ENCODE measurements at regions of chr16 and their contacts with region 1.

Region 1: GRCh38 chr16:3123986-3124886 is 10.6 kb upstream of the ZNF213 start:
- DNase-seq: peak; percentile 95
- H3K4me3 ChIP-seq: peak overlapping the region; percentile 45 to 58 (median 46)
- H3K27ac ChIP-seq: no peak overlapping the region
- H3K4me1 ChIP-seq: peaks cover 8% of the 10 kb centered on the region
- H3K27me3 ChIP-seq: no peaks in the 10 kb centered on the region
- CTCF ChIP-seq: peak in 1 of 2 donors; percentile 35
- POLR2A ChIP-seq: peak; percentile 55

Region 2: DNA sequence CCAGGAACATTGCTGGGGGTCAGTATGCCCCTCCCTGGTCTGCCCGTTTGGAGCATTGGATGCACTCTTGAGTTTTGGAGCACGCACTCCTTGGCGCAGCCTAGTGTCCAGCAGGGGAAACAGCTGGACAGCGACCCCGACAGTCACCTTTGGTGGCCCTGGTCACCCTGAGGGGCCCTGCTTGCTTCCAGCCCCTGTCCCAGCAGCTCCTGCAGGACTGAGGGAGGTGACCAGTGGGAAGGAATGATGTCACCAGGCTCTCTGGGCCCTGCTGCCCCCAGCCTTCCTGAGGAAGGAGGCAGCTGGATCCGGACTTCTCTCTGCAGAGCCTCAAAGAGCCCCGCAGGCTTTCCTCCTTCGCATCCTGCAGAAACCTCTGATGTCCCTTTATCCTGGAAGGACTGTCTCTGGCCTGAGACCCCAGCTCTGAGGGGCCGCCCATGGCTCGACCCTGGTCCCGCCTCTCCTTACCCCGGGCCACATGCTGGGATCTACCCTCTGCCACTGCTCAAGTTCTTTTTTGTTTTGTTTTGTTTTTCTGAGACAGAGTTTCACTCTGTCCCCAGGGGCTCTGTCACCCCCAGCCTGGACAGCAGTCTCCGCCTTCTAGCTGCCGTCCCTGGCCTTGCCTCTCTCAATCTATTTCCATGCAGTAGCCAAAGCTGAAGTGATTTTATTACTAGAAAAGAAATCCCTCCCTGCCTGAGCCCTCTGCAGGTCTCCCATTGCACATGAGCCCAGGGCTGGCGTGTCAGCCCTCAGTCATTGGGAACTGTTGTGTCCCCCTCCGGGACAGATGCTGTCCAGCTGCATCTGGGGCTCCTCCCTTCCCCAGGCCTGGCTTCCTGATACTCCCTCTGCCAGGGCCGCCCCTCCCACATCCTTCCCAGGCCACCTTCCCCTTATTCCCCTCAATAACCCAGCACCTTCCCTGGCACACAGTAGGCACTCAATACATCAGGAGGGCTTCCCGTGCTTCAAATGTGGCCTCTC is 36.7 kb before region 1 on chr16:
- CTCF ChIA-PET with region 1: interaction called, 16 read pairs
- POLR2A ChIA-PET with region 1: no interaction called
- dilution Hi-C with region 1: no loop called
- intact Hi-C with region 1: loop called (anchors 2 kb)
- DNase-seq: peak; percentile 89
- H3K4me3 ChIP-seq: peak overlapping the region in 1 of 3 experiments; percentile 5
- H3K27ac ChIP-seq: peak overlapping the region; percentile 73
- H3K4me1 ChIP-seq: peaks cover 25% of the 10 kb centered on the region
- H3K27me3 ChIP-seq: no peaks in the 10 kb centered on the region
- CTCF ChIP-seq: peak; percentile 3 to 23
- POLR2A ChIP-seq: peak; percentile 52

Region 3: GRCh38 chr16:3099732-3100499 is 24.3 kb before region 1 on chr16:
- CTCF ChIA-PET with region 1: interaction called, 49 read pairs
- POLR2A ChIA-PET with region 1: interaction called, 3 read pairs
- dilution Hi-C with region 1: no loop called
- intact Hi-C with region 1: loop called (anchors 1 kb)
- DNase-seq: peak; percentile 81
- H3K4me3 ChIP-seq: no peak overlapping the region
- H3K27ac ChIP-seq: no peak overlapping the region
- H3K4me1 ChIP-seq: peaks cover 26% of the 10 kb centered on the region
- H3K27me3 ChIP-seq: peaks cover 0 to 2% of the 10 kb centered on the region in 2 experiments
- CTCF ChIP-seq: no peak
- POLR2A ChIP-seq: no peak

Region 4: GRCh38 chr16:3106205-3106928 is 17.9 kb before region 1 on chr16:
- CTCF ChIA-PET with region 1: interaction called, 26 read pairs
- POLR2A ChIA-PET with region 1: interaction called, 3 read pairs
- dilution Hi-C with region 1: no loop called
- intact Hi-C with region 1: loop called (anchors 1 kb)
- DNase-seq: peak; percentile 76
- H3K4me3 ChIP-seq: peak overlapping the region; percentile 34 to 76 (median 73)
- H3K27ac ChIP-seq: peak overlapping the region; percentile 38
- H3K4me1 ChIP-seq: peaks cover 17% of the 10 kb centered on the region
- H3K27me3 ChIP-seq: no peaks in the 10 kb centered on the region
- CTCF ChIP-seq: no peak
- POLR2A ChIP-seq: peak; percentile 56

Measured in endothelial cell of umbilical vein (primary cell).